Activated CD4-positive, alpha-beta T cell treated with anti-CD3 and anti-CD28 coated beads for 36 hours (primary cell): ENCODE measurements at regions of chr15 and their contacts with region 1.

Region 1: DNA sequence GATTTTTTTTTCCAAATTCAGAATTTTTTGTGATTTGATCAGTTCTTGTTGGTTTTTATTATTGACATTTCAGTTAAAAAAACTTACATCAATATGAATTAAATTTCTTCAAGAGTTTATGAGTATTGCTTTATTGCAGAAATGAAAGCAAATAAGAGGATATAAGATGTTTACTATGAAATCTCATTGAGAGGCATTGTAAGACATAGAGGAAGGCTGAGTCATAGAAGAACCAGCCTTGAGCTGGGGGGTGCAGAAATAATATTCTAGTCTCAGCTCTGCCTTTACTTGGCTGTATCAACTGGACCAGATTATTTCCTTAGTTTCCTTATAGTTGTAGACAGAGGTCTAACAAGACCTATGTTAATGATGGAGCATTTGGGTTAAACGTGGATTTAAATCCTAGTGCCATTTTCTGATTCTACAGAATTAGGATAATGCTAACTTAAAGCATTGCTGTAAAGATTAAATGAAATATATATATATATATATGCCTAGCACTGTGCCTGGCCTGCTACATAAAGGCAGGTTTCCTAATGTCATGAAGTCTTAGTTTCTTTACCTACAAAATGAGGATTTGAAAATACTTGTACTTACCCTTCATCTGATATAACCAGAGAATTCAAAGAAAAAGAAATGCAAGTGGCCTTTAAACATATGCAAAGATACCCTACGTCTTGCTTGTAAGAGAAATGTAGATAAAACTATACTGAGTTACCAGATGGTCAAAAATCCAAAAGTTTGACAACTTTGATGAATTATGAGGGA is 7.3 kb downstream of the FAM98B start:
- DNase-seq: no peak
- ATAC-seq: peak; percentile 76
- H3K4me3 Mint-ChIP-seq: no peak overlapping the region
- H3K27ac Mint-ChIP-seq: no peak overlapping the region
- H3K4me1 Mint-ChIP-seq: peaks cover 47% of the 10 kb centered on the region
- H3K27me3 Mint-ChIP-seq: no peaks in the 10 kb centered on the region

Region 2: GRCh38 chr15:38474155-38474757 is 13.0 kb after region 1 on chr15:
- CTCF ChIA-PET with region 1: interaction called, 8 read pairs
- POLR2A ChIA-PET with region 1: no interaction called
- intact Hi-C with region 1: loop called in 1 of 2 experiments (anchors 2 kb)
- DNase-seq: peak; percentile 30
- ATAC-seq: peak; percentile 97
- H3K4me3 Mint-ChIP-seq: no peak overlapping the region
- H3K27ac Mint-ChIP-seq: no peak overlapping the region
- H3K4me1 Mint-ChIP-seq: peaks cover 11% of the 10 kb centered on the region
- H3K27me3 Mint-ChIP-seq: no peaks in the 10 kb centered on the region